Heart right ventricle (tissue), 16 donors: ENCODE measurements at regions of chr1 and their contacts with region 1.

Region 1: GRCh38 chr1:1890506-1891348 is at the start of gene GNB1:
- DNase-seq: peak; percentile 87 to 91
- ATAC-seq: peak; percentile 81 to 93 (median 88)
- H3K4me3 ChIP-seq: peak within 1 kb of the TSS; percentile 75 to 98 (median 88)
- H3K27ac ChIP-seq: peak within 1 kb of the TSS; percentile 91 to 99 (median 96)
- H3K4me1 ChIP-seq: peaks cover 33 to 80% (median 68%) of the 10 kb centered on the region in 9 donors
- H3K27me3 ChIP-seq: no peaks in the 10 kb centered on the region
- CTCF ChIP-seq: no peak
- total RNA-seq, gene GNB1: 139 to 228 (median 174) TPM

Region 2: DNA sequence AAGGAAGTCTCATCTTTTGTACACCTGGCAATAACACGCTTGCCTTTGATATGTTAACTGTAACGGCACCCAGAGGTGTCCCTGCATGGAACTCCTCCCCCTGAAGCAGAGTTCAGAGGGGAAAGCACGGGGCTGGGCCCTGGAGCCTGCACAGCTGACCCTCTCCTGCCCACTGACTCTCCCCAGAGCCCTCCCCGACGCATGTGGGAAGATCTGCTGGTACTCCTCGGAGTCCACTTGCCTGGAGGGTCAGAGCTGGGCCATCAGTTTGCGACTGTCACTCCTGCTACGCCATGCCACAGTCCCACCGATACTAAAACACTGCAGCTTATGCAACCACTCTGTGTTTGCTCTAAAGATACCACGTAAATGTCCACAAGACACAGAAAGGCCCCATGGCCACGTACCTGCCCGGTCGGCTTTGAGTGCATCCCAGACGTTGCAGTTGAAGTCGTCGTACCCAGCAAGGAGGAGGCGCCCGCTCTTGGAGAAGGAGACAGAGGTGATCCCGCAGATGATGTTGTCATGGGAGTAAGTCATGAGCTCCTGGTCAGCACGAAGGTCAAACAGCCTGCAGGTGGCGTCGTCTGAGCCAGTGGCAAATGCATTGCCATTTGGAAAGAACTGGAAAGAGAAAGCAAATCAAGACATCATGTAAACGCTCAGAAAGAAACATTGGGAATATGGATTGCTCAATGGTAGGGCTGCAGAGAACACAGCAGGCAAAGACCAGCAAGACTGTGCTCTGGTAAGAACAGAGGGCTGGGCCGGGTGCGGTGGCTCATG is 101.9 kb before region 1 on chr1:
- intact Hi-C with region 1: loop called in 3 of 10 experiments (anchors 5 to 10 kb)
- DNase-seq: no peak
- ATAC-seq: peak in 1 of 8 donors; percentile 17
- H3K4me3 ChIP-seq: no peak overlapping the region
- H3K27ac ChIP-seq: peak overlapping the region in 5 of 10 donors; percentile 19 to 67 (median 46)
- H3K4me1 ChIP-seq: peaks cover 6 to 22% (median 16%) of the 10 kb centered on the region in 9 donors
- H3K27me3 ChIP-seq: no peaks in the 10 kb centered on the region
- CTCF ChIP-seq: peak in 5 of 9 donors; percentile 19 to 39 (median 35)

Region 3: GRCh38 chr1:1833916-1834325 is 56.8 kb before region 1 on chr1:
- intact Hi-C with region 1: loop called in 2 of 10 experiments (anchors 10 kb)
- DNase-seq: no peak
- ATAC-seq: peak in 5 of 8 donors; percentile 15 to 52 (median 39)
- H3K4me3 ChIP-seq: no peak overlapping the region
- H3K27ac ChIP-seq: peak overlapping the region in 3 of 10 donors; percentile 1 to 45 (median 39)
- H3K4me1 ChIP-seq: peaks cover 11 to 47% (median 28%) of the 10 kb centered on the region in 9 donors
- H3K27me3 ChIP-seq: no peaks in the 10 kb centered on the region
- CTCF ChIP-seq: no peak

Region 4: GRCh38 chr1:1847061-1847850 is 43.5 kb before region 1 on chr1:
- intact Hi-C with region 1: loop called in 2 of 10 experiments (anchors 5 to 10 kb)
- DNase-seq: no peak
- ATAC-seq: peak in 6 of 8 donors; percentile 49 to 83 (median 65)
- H3K4me3 ChIP-seq: no peak overlapping the region
- H3K27ac ChIP-seq: peak overlapping the region in 9 of 10 donors; percentile 26 to 67 (median 54)
- H3K4me1 ChIP-seq: peaks cover 4 to 85% (median 75%) of the 10 kb centered on the region in 9 donors
- H3K27me3 ChIP-seq: no peaks in the 10 kb centered on the region
- CTCF ChIP-seq: no peak

Region 5: DNA sequence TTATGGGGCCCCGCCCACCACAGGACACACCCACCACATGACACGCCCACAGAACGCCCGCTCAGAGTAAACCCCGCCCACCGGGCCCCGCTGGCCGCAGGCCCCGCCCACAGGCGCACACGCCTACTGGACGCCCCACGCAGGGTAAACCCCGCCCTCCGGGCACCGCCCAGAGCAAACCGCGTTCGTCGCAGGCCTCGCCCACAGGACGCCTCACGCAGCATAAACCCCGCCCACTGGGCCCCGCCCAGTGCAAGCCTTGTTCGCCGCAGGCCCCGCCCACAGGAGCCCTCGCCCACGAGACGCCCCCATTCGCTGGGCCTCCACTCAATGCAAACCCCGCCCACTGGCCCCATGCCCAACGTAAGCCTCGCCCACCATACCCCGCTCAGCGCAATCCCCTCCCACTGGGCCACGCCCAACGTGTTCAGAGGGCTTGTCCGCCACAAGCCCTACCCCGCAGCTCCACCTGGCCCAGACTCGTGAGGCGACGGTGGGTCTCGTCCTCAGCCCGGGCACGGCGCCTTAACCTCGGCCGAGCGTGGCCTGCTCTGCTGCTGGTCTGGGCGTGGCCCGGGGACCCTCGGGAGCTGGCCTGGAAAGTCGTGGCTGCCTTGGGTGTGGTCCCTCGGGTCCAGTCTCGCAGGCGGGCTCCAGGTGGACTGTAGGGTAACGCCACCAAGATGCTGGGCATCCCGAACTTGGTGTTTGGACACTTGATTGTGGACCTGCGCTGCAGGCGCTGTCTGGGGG is 28.8 kb after region 1 on chr1:
- intact Hi-C with region 1: no loop called
- DNase-seq: peak; percentile 98 to 100
- ATAC-seq: peak; percentile 87 to 96 (median 93)
- H3K4me3 ChIP-seq: peak overlapping the region in 9 of 10 donors; percentile 36 to 73 (median 57)
- H3K27ac ChIP-seq: peak overlapping the region in 9 of 10 donors; percentile 4 to 65 (median 49)
- H3K4me1 ChIP-seq: peaks cover 10 to 19% (median 13%) of the 10 kb centered on the region in 9 donors
- H3K27me3 ChIP-seq: no peaks in the 10 kb centered on the region
- CTCF ChIP-seq: no peak

Region 6: GRCh38 chr1:1929639-1930471 is 39.1 kb after region 1 on chr1:
- intact Hi-C with region 1: no loop called
- DNase-seq: no peak
- ATAC-seq: peak in 1 of 8 donors; percentile 2
- H3K4me3 ChIP-seq: no peak overlapping the region
- H3K27ac ChIP-seq: no peak overlapping the region
- H3K4me1 ChIP-seq: peaks cover 0 to 26% (median 13%) of the 10 kb centered on the region in 9 donors
- H3K27me3 ChIP-seq: no peaks in the 10 kb centered on the region
- CTCF ChIP-seq: no peak

Region 7: DNA sequence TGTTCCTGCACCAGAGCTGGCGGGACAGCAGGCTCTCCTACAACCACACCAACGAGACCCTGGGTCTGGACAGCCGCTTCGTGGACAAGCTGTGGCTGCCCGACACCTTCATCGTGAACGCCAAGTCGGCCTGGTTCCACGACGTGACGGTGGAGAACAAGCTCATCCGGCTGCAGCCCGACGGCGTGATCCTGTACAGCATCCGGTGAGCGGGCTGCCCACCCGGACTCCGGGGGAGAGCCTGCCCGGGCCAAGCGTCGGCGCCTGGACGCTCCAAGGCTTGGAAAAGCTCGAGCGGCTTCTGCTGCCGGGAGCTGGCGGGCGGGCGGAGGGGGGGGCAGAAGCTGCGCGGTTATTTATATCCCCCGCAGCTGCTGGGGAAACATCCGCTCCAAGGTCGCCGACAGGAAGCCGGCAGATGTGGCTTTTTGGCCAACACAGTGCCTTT is 134.8 kb after region 1 on chr1:
- intact Hi-C with region 1: no loop called
- DNase-seq: peak; percentile 55 to 60
- ATAC-seq: peak; percentile 55 to 92 (median 75)
- H3K4me3 ChIP-seq: peak overlapping the region in 5 of 10 donors; percentile 15 to 30 (median 25)
- H3K27ac ChIP-seq: peak overlapping the region in 9 of 10 donors; percentile 29 to 75 (median 57)
- H3K4me1 ChIP-seq: peaks cover 0 to 22% (median 15%) of the 10 kb centered on the region in 9 donors
- H3K27me3 ChIP-seq: peaks cover 0 to 41% (median 30%) of the 10 kb centered on the region in 7 donors
- CTCF ChIP-seq: no peak

Region 8: DNA sequence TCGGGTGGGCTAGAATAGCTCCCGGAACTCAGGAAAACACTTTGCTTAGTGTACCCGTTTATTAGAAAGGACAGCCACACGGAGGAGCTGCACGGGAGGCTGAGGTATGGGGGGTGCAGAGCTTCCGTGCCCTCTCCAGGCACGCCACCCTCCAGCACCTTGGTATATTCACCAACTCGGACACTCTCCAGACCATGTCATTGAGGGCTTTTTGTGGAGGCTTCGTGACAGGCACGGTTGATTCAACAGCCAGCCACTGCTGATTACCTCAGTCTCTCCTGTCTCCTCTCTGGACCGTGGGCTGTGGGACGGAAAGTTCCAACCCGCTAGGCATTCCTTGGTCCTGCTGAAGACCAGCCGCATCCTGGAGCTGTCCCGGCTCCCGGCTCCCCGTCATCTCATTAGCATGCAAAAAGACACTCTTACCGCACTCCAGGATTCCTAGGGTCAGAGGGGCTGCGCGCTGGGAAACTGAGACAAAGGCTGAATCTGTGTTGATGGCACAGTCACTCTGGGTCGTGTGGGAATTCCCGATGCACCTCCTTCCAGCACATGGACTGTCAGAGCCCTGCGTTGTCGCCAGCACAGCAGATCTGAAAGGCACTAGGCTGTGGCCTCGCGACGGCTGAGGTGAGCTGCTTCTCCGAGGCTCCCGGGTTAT is 225.1 kb after region 1 on chr1:
- intact Hi-C with region 1: no loop called
- DNase-seq: peak in 1 of 2 donors; percentile 3
- ATAC-seq: peak in 1 of 8 donors; percentile 42
- H3K4me3 ChIP-seq: no peak overlapping the region
- H3K27ac ChIP-seq: no peak overlapping the region
- H3K4me1 ChIP-seq: peaks cover 0 to 6% (median 0%) of the 10 kb centered on the region in 9 donors
- H3K27me3 ChIP-seq: peaks cover 0 to 8% (median 0%) of the 10 kb centered on the region in 7 donors
- CTCF ChIP-seq: no peak